ENCODE measurements at regions of chr18 and their contacts with region 1.

Region 1: GRCh38 chr18:9102508-9103375 is at the start of gene NDUFV2:
- DNase-seq: peak; percentile 97
- H3K4me3 Mint-ChIP-seq: peak within 1 kb of the TSS; percentile 93
- H3K27ac Mint-ChIP-seq: peak within 1 kb of the TSS; percentile 98
- H3K4me1 Mint-ChIP-seq: peaks cover 55% of the 10 kb centered on the region
- H3K27me3 Mint-ChIP-seq: no peaks in the 10 kb centered on the region
- total RNA-seq, gene NDUFV2: 177 to 185 TPM

Region 2: GRCh38 chr18:9048808-9049494 is 53.8 kb before region 1 on chr18:
- CTCF ChIA-PET with region 1: no interaction called
- POLR2A ChIA-PET with region 1: no interaction called
- DNase-seq: no peak
- H3K4me3 Mint-ChIP-seq: no peak overlapping the region
- H3K27ac Mint-ChIP-seq: no peak overlapping the region
- H3K4me1 Mint-ChIP-seq: peaks cover 13% of the 10 kb centered on the region
- H3K27me3 Mint-ChIP-seq: peaks cover 3% of the 10 kb centered on the region

Region 3: GRCh38 chr18:9082711-9083510 is 19.8 kb before region 1 on chr18:
- CTCF ChIA-PET with region 1: interaction called, 15 read pairs
- POLR2A ChIA-PET with region 1: interaction called, 3 read pairs
- DNase-seq: peak; percentile 59
- H3K4me3 Mint-ChIP-seq: peak overlapping the region; percentile 62
- H3K27ac Mint-ChIP-seq: peak overlapping the region; percentile 96
- H3K4me1 Mint-ChIP-seq: peaks cover 64% of the 10 kb centered on the region
- H3K27me3 Mint-ChIP-seq: no peaks in the 10 kb centered on the region

Region 4: DNA sequence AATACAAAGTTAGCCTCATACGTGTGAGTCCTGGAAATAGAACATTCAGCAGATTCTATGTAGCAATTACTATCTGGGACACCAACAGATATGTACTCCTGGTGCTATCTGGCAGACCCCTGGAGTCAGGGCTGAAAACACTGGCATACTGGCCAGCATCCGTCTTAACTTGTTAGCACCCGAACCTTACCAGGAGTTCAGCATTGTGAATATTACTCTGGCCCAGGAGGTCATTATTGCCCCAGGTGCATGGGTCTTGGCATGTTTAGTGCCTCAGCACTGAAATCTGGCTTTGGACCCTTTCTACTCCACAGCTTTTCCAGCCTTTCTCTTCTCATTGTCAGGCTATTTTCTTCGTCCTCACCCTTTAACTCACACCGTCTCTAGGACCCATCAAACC is 12.2 kb before region 1 on chr18:
- CTCF ChIA-PET with region 1: interaction called, 7 read pairs
- POLR2A ChIA-PET with region 1: interaction called, 18 read pairs
- DNase-seq: no peak
- H3K4me3 Mint-ChIP-seq: peak overlapping the region; percentile 79
- H3K27ac Mint-ChIP-seq: peak overlapping the region; percentile 95
- H3K4me1 Mint-ChIP-seq: peaks cover 81% of the 10 kb centered on the region
- H3K27me3 Mint-ChIP-seq: no peaks in the 10 kb centered on the region

Region 5: DNA sequence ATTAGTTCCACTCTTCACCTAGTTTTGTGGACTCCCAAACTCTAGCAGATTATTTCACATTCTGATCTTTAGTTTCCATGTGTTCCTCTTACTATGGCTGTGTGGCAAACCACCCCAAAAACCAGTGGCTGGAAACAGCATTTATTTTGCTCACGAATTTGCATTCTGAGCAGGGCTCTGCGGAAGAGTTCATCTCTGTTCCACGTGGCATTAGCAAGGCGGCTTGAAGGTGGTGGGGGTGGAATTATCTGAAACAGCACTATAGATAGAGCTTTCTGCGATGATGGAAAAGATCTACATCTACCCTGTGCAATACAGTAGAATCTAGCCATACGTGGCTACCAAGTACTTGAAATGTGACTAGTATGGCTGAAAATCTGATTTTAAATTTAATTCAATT is 237.7 kb after region 1 on chr18:
- CTCF ChIA-PET with region 1: no interaction called
- POLR2A ChIA-PET with region 1: no interaction called
- DNase-seq: no peak
- H3K4me3 Mint-ChIP-seq: no peak overlapping the region
- H3K27ac Mint-ChIP-seq: no peak overlapping the region
- H3K4me1 Mint-ChIP-seq: peaks cover 25% of the 10 kb centered on the region
- H3K27me3 Mint-ChIP-seq: no peaks in the 10 kb centered on the region

Measured in activated CD4-positive, alpha-beta T cell treated with anti-CD3 and anti-CD28 coated beads, Interleukin-2, amount 10 ng/mL, durations not matched to agents 7 days and 5 days (primary cell).